Mammary epithelial cell (primary cell): ENCODE measurements at regions of chr2 and their contacts with region 1.

Region 1: DNA sequence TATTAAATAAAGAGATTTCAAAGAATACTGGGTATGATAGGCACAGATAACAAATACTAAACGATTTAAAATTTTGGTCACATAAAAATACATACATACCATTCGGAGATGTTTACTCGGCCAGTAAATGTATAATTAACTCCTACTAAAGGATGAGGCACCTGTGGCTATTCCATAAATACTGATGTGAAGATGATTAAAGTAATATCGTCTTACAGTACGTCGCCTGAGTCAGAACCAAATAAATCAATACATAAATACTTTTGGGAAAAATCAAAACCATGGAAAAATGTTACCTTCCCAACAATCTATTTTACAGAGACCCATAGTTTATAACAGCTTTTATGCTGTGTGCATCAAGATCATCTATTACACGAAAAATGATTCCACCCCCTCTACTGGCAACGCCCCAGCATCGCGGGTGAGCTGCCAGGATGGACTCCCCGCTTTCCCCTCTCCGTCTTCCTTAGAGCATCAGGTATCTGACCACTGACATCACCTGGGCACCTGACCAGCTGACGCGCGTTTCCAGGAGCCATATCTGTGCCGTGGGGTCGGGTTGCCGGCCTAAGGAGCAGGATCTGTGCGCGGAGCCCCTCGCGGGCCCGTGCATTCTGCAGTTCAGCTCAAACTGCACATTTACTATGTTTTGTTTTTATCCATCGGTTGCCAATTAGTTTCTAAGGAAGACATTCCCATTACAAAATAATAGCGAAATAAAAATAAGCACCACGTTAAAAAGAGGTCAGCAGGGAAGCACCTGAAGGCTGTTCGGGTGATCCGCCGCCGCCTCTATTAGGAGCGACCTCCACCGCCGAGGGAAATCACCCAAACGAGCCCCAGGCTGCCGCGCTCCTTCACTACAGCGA is 901 bp downstream of the ICA1L start:
- DNase-seq: peak; percentile 84
- H3K4me3 ChIP-seq: peak overlapping the region; percentile 75 to 88 (median 88)
- H3K27ac ChIP-seq: peak overlapping the region; percentile 82
- H3K4me1 ChIP-seq: no peaks in the 10 kb centered on the region
- H3K27me3 ChIP-seq: no peaks in the 10 kb centered on the region
- CTCF ChIP-seq: peak; percentile 50 to 61

Region 2: GRCh38 chr2:202278944-202279343 is 591.7 kb before region 1 on chr2:
- CTCF ChIA-PET with region 1: no interaction called
- dilution Hi-C with region 1: no loop called
- in situ Hi-C with region 1: no loop called
- intact Hi-C with region 1: loop called (anchors 5 kb)
- DNase-seq: peak; percentile 41
- H3K4me3 ChIP-seq: no peak overlapping the region
- H3K27ac ChIP-seq: peak overlapping the region; percentile 75
- H3K4me1 ChIP-seq: peaks cover 28% of the 10 kb centered on the region
- H3K27me3 ChIP-seq: no peaks in the 10 kb centered on the region
- CTCF ChIP-seq: peak; percentile 52 to 66

Region 3: GRCh38 chr2:202577250-202578183 is 293.1 kb before region 1 on chr2:
- CTCF ChIA-PET with region 1: interaction called, 3 read pairs
- dilution Hi-C with region 1: no loop called
- in situ Hi-C with region 1: loop called in 1 of 2 experiments (anchors 10 kb)
- intact Hi-C with region 1: loop called (anchors 1 kb)
- DNase-seq: no peak
- H3K4me3 ChIP-seq: no peak overlapping the region
- H3K27ac ChIP-seq: no peak overlapping the region
- H3K4me1 ChIP-seq: no peaks in the 10 kb centered on the region
- H3K27me3 ChIP-seq: no peaks in the 10 kb centered on the region
- CTCF ChIP-seq: no peak

Region 4: DNA sequence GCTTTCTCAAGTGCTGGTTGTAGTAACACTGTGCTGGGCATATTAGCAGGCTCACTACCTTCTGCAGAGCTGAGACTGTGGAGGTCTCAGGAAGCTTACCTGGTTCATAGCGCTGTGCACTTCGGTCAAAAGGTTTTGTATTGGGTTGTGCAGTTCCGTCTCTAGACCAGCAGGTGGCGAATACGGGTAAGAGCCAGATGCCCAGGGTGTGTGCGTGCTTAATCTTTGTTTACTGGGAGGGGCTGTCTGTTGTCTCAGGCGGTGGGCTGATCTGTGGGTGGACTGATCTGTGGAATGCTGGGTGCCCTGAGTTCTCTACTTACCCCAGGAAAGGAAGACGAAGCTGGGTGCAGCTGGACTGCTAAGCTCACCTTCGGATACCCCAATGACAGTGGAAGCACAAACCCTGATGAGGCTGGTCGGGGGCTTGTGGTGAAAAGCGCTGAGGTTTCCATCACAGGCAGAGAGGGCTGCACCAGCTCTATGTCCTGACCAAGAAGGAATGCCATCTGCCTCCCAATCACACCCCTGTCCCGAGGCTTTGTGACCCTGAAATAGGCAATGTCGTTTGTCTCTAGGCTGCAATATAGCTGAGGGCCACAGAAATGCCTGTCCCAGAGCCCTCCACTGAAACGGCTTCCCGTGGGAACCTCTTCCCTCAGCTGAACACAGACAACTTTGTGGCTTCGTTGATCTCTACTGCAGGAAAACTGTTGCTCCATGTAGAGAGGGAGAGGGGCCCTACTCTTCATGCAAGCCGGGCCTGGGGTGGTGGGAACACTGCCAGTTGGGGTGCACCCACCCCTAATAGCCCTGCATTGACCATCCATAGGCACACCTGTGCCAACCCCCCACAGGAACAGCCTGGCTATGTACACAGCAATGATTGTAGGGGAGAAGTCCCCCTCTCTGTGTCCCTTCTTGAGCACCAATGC is 281.8 kb before region 1 on chr2:
- CTCF ChIA-PET with region 1: no interaction called
- dilution Hi-C with region 1: no loop called
- in situ Hi-C with region 1: loop called in 1 of 2 experiments (anchors 10 kb)
- intact Hi-C with region 1: loop called (anchors 1 kb)
- DNase-seq: peak; percentile 57
- H3K4me3 ChIP-seq: no peak overlapping the region
- H3K27ac ChIP-seq: no peak overlapping the region
- H3K4me1 ChIP-seq: peaks cover 3% of the 10 kb centered on the region
- H3K27me3 ChIP-seq: no peaks in the 10 kb centered on the region
- CTCF ChIP-seq: peak; percentile 89 to 94

Region 5: GRCh38 chr2:202634556-202635427 is 235.9 kb before region 1 on chr2 and contains the start of gene FAM117B:
- CTCF ChIA-PET with region 1: no interaction called
- dilution Hi-C with region 1: no loop called
- in situ Hi-C with region 1: no loop called
- intact Hi-C with region 1: loop called (anchors 2 kb)
- DNase-seq: peak; percentile 96
- H3K4me3 ChIP-seq: peak within 1 kb of the TSS; percentile 86 to 98 (median 97)
- H3K27ac ChIP-seq: peak within 1 kb of the TSS; percentile 60
- H3K4me1 ChIP-seq: peaks cover 10% of the 10 kb centered on the region
- H3K27me3 ChIP-seq: no peaks in the 10 kb centered on the region
- CTCF ChIP-seq: no peak
- total RNA-seq, gene FAM117B: 2.8 to 3.4 TPM

Region 6: GRCh38 chr2:202831242-202832220 is 39.1 kb before region 1 on chr2:
- CTCF ChIA-PET with region 1: no interaction called
- dilution Hi-C with region 1: no loop called
- in situ Hi-C with region 1: no loop called
- intact Hi-C with region 1: loop called (anchors 1 kb)
- DNase-seq: peak; percentile 64
- H3K4me3 ChIP-seq: no peak overlapping the region
- H3K27ac ChIP-seq: no peak overlapping the region
- H3K4me1 ChIP-seq: no peaks in the 10 kb centered on the region
- H3K27me3 ChIP-seq: no peaks in the 10 kb centered on the region
- CTCF ChIP-seq: peak; percentile 66 to 70

Region 7: DNA sequence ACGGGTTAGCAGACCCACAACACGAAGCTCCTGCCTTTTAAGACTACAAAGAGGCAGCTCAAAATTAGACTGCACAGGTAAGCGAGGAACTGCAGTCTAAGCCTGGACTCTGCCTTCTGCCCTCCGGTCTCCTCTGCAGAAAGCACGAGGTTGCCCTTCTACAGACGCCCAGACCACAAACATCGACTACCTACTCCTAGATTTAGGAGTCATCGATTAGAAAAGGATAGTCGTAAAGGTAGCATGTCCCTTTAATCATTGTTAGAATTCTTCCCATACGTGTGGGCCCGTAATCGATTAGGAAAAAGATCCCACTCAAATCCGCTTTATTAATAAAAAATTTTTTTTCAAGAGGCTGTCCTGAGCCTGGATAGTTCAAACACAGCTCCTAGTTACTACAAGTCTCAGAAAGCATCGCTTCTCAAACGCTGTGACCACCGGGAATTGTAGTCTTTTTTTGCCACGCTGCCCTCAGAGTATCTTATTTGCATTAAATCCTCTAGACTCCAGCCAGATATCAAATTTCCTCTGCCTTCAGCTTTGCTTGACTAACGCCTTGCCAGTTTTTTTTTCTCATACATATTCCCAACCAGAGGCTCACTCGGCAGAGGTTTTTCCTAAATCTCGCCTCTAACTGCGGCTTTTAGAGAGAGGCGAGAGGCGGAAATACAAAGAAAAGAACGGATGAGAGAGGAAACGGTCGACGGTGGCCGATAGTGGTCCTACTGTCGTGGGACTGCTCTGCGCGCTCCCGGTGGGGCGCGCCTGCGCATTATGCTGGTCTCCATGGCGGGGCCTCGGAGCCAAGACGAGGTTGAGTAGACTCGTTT is 41.1 kb after region 1 on chr2 and contains the starts of genes CARF and WDR12:
- CTCF ChIA-PET with region 1: no interaction called
- dilution Hi-C with region 1: no loop called
- in situ Hi-C with region 1: no loop called
- intact Hi-C with region 1: loop called (anchors 1 kb)
- DNase-seq: peak; percentile 93
- H3K4me3 ChIP-seq: peak within 1 kb of the TSS; percentile 79 to 99 (median 98)
- H3K27ac ChIP-seq: peak within 1 kb of the TSS; percentile 78
- H3K4me1 ChIP-seq: peaks cover 9% of the 10 kb centered on the region
- H3K27me3 ChIP-seq: no peaks in the 10 kb centered on the region
- CTCF ChIP-seq: no peak
- total RNA-seq, gene CARF: 6.5 to 13.0 TPM
- total RNA-seq, gene WDR12: 31.2 to 86.9 TPM